ENCODE measurements at regions of chr12 and their contacts with region 1.

Region 1: GRCh38 chr12:69585189-69586062 is at the start of gene CCT2:
- DNase-seq: peak; percentile 85 to 96
- H3K4me3 ChIP-seq: peak within 1 kb of the TSS; percentile 68 to 99 (median 90)
- H3K27ac ChIP-seq: peak within 1 kb of the TSS; percentile 97
- H3K4me1 ChIP-seq: no peaks in the 10 kb centered on the region
- H3K27me3 ChIP-seq: no peaks in the 10 kb centered on the region
- CTCF ChIP-seq: peak; percentile 17 to 58 (median 48); a peak in 2 of 4 replicates
- EP300 ChIP-seq: no peak
- POLR2A ChIP-seq: peak; percentile 92 to 98
- RAD21 ChIP-seq: peak in 1 of 2 experiments; percentile 1; a peak in 1 of 4 replicates
- total RNA-seq, gene CCT2: 409 and 419 TPM in 2 replicates

Region 2: GRCh38 chr12:69519871-69520270 is 65.6 kb before region 1 on chr12:
- CTCF ChIA-PET with region 1: no interaction called
- POLR2A ChIA-PET with region 1: no interaction called
- DNase-seq: no peak
- H3K4me3 ChIP-seq: no peak overlapping the region
- H3K27ac ChIP-seq: no peak overlapping the region
- H3K4me1 ChIP-seq: peaks cover 0 to 2% (median 0%) of the 10 kb centered on the region in 4 experiments; a peak in 1 of 7 replicates
- H3K27me3 ChIP-seq: no peaks in the 10 kb centered on the region
- CTCF ChIP-seq: no peak
- EP300 ChIP-seq: no peak
- POLR2A ChIP-seq: no peak
- RAD21 ChIP-seq: no peak

Region 3: GRCh38 chr12:69595689-69596088 is 10.3 kb after region 1 on chr12:
- CTCF ChIA-PET with region 1: interaction called, 3 read pairs
- POLR2A ChIA-PET with region 1: interaction called, 40 read pairs
- DNase-seq: no peak
- H3K4me3 ChIP-seq: no peak overlapping the region
- H3K27ac ChIP-seq: no peak overlapping the region
- H3K4me1 ChIP-seq: no peaks in the 10 kb centered on the region
- H3K27me3 ChIP-seq: no peaks in the 10 kb centered on the region
- CTCF ChIP-seq: no peak
- EP300 ChIP-seq: no peak
- POLR2A ChIP-seq: no peak
- RAD21 ChIP-seq: no peak

Region 4: DNA sequence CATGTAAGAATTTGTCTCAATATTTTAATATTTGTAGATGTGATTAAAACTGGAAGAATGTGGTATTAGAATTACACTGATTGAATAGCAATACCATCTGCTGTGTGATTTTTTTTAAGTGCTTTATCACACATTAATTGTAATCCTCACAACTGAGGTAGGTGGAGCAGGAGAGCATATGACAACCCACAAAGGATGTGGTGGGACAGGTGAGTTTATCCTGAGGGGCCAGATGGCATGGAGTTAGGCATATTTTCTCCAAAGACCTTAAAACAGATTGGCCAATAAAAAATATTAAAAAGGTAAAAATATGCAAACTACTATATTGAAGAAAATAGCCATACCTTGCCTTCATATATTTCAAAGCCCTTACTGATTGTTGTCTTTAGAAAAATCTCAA is 17.5 kb after region 1 on chr12:
- CTCF ChIA-PET with region 1: no interaction called
- POLR2A ChIA-PET with region 1: interaction called, 40 read pairs
- DNase-seq: no peak
- H3K4me3 ChIP-seq: no peak overlapping the region
- H3K27ac ChIP-seq: no peak overlapping the region
- H3K4me1 ChIP-seq: no peaks in the 10 kb centered on the region
- H3K27me3 ChIP-seq: no peaks in the 10 kb centered on the region
- CTCF ChIP-seq: peak in 2 of 3 experiments; percentile 15 to 23; a peak in 1 of 4 replicates
- EP300 ChIP-seq: no peak
- POLR2A ChIP-seq: peak in 1 of 2 experiments; percentile 37; a peak in 1 of 3 replicates
- RAD21 ChIP-seq: peak in 1 of 2 experiments; percentile 32; a peak in 3 of 4 replicates

Region 5: DNA sequence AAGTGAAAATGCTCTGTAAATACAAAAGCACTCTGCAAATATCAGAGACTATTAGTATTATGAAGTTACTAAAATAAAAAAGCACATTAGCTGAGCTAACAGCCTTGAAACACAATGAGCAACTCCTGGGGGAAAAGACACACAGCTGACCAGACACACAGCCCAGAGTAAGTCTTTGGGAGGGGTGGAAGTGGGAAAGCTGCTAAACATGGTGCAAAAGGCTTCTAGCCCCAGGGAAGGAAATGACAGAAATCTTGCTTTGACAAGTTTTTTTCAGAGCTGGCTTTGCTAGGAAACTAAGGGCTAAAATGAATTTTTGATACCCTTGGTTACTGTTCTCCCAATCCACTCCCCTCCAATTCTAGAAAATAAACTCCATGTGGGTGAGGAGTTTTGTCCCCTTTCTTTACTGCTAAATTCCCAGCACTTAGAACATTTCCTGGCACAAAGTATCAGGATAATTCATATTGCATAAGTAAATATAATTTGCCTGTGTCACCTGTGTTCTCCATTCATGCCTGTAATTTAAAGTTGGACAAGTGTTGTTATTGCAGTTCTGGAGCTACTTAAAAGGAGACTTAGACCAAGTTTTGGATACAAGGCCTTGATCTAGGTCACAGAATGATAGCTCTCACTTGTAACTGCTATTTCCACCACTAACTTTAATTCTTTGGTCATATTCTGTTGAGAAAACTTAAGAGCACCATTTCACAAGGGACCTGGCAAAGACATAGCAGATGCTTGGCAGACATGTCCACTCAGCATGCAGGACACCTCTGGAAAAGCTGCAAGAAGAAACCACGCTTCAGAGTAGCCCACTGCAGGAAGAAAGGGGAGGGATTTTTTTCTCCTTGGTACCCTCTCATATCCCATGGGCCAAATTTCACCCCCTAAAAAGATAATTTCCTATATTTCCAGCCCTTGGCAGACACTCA is 134.2 kb after region 1 on chr12:
- CTCF ChIA-PET with region 1: no interaction called
- POLR2A ChIA-PET with region 1: no interaction called
- DNase-seq: no peak
- H3K4me3 ChIP-seq: no peak overlapping the region
- H3K27ac ChIP-seq: no peak overlapping the region
- H3K4me1 ChIP-seq: no peaks in the 10 kb centered on the region
- H3K27me3 ChIP-seq: no peaks in the 10 kb centered on the region
- CTCF ChIP-seq: no peak
- EP300 ChIP-seq: no peak
- POLR2A ChIP-seq: no peak
- RAD21 ChIP-seq: no peak

Measured in H1 (cell line).